CD4-positive, alpha-beta T cell (primary cell): ENCODE measurements at regions of chr10 and their contacts with region 1.

Region 1: DNA sequence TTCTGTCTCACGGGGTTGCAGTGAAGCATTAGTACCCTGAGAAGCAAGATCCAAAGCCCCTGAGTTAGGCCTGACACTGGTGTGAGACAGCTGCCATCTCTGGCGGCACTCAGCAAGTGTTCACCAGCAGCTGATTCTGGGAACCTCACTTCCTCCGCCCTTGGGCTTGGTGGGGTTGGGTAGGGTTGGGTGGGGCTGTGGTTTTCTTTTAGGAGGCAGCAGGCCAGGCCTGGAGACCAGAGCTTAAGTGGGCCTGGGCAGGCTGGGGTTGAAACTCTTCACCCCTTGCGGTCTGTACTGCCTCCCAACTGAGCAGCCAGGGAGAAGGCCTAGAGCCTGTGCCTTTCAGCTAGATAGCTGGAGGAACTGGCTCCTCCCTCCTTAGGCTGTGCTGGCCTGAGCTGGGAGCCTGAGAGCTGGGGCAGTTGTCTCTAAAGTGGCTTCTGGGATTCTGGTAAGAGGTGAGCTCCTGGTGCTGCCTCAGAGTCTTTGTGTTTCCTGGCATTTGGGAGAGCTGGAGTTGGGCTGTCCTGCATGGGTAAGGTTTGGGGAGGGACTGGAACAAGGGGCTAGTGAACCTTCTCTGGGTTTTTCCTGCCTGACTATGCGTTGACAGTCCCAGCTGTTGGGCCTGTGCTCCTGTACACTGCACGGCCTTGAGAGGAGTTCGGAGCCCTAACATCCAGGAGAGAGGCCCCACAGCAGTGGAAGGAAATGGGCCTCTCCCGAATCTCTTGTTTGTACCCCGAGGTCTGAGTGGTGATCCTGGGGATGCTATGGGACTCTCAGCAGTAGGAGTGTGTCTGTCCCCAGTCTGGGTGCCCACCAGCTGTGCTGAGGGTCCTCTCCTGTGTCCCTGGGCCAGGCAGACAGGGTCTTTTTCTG is 5.2 kb downstream of the TSPAN14 start:
- DNase-seq: peak; percentile 47 to 87 (median 66)
- ATAC-seq: peak; percentile 57
- H3K4me3 ChIP-seq: peak overlapping the region; percentile 97
- H3K4me3 Mint-ChIP-seq: peak overlapping the region; percentile 95
- H3K27ac ChIP-seq: peak overlapping the region; percentile 69 to 91
- H3K27ac Mint-ChIP-seq: peak overlapping the region; percentile 92
- H3K4me1 ChIP-seq: peaks cover 92% of the 10 kb centered on the region
- H3K4me1 Mint-ChIP-seq: peaks cover 83% of the 10 kb centered on the region
- H3K27me3 ChIP-seq: no peaks in the 10 kb centered on the region
- H3K27me3 Mint-ChIP-seq: no peaks in the 10 kb centered on the region
- CTCF ChIP-seq: no peak

Region 2: DNA sequence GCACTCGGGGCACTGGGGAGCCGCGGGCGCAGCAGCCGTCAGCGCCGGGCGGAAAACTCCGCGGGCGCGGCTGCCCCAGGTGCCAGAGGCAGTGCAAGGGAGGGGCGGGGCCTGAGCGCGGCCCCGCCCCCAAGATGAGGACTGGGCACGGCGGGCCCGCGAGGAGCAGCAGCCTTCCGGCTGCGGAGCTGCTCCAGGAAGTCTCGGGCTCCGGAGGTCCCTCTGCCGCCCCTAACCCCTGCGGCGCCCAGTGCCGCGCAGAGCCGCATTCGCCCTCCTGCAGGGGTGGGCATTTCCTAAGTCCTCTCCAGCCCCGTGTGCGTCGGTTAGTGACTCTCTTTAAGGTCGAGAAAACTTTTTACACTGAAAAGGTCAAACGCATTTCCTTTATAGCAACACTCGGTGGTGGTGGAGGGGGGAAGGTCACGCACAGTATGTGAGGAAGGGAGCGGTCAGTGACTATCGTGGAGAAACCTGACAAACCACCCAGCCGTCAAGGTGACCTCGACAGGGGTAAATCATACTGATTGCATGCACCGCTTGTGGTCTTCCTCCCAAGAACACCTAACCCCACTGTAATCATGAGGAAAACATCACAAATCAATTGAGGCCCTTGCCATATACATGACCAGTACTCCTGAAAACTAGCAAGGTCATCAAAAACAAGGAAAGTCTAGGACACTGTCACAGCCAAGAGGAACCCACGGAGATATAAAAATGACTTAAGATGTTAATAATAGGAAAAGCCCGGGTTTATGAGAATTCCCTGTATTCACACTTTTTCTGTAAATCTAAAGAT is 253.6 kb before region 1 on chr10 and contains the start of gene ANXA11:
- CTCF ChIA-PET with region 1: no interaction called
- POLR2A ChIA-PET with region 1: no interaction called
- intact Hi-C with region 1: loop called in 1 of 2 experiments (anchors 10 kb)
- DNase-seq: peak; percentile 72 to 94 (median 88)
- ATAC-seq: peak; percentile 79
- H3K4me3 ChIP-seq: peak within 1 kb of the TSS; percentile 86
- H3K4me3 Mint-ChIP-seq: peak within 1 kb of the TSS; percentile 90
- H3K27ac ChIP-seq: peak within 1 kb of the TSS; percentile 72 to 86
- H3K27ac Mint-ChIP-seq: peak within 1 kb of the TSS; percentile 96
- H3K4me1 ChIP-seq: peaks cover 53% of the 10 kb centered on the region
- H3K4me1 Mint-ChIP-seq: peaks cover 56% of the 10 kb centered on the region
- H3K27me3 ChIP-seq: no peaks in the 10 kb centered on the region
- H3K27me3 Mint-ChIP-seq: no peaks in the 10 kb centered on the region
- CTCF ChIP-seq: no peak
- total RNA-seq, gene ANXA11: 153 to 159 TPM

Region 3: DNA sequence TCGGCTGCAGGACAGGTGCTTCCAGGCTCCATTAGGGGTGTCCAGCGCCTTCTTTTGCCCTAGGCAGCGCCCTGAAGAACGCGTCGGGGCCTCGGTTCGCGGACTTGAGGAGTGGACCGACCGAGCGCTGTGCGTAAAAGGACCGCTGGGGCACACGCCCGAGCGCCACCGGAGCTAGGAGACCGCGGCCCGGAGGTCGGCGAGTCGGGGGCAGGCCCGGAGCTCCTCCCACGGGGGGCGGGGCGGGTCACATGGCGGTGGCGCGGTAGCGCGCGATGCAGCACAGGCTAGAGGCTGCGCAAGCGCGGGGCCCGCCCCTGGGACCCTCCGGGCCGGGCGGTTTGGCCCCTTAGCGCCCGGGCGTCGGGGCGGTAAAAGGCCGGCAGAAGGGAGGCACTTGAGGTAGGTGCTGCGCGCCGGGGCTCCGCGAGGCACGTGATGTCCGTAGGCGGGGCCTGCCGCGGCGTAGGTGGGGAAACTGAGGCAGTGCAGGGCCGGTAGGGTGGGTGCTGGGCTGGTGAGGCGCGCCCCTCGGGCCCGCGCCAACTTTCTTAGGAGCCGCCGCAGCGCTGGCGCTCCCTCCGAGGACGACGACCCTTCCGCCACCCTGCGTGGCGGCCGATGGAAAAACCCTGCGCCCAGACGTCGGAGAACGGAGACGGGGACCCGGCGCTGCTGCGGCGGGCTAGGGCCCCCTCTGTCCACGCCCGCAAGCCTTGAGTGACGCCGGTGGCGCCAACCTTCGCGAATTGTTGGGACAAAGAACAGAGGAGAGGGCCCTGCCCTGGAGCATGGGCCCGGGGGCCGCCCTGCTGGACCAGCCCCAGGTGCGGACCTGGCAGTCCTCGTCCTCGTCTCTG is 50.8 kb before region 1 on chr10 and contains the start of gene PRXL2A:
- CTCF ChIA-PET with region 1: interaction called, 3 read pairs
- POLR2A ChIA-PET with region 1: interaction called, 8 read pairs
- intact Hi-C with region 1: loop called in 1 of 2 experiments (anchors 5 kb)
- DNase-seq: peak; percentile 61 to 89 (median 76)
- ATAC-seq: peak; percentile 95
- H3K4me3 ChIP-seq: peak within 1 kb of the TSS; percentile 83
- H3K4me3 Mint-ChIP-seq: peak within 1 kb of the TSS; percentile 94
- H3K27ac ChIP-seq: peak within 1 kb of the TSS in 1 of 2 donors; percentile 10
- H3K27ac Mint-ChIP-seq: peak within 1 kb of the TSS; percentile 69
- H3K4me1 ChIP-seq: peaks cover 19% of the 10 kb centered on the region
- H3K4me1 Mint-ChIP-seq: peaks cover 50% of the 10 kb centered on the region
- H3K27me3 ChIP-seq: no peaks in the 10 kb centered on the region
- H3K27me3 Mint-ChIP-seq: no peaks in the 10 kb centered on the region
- CTCF ChIP-seq: no peak
- total RNA-seq, gene PRXL2A: 3.9 to 4.6 TPM

Region 4: GRCh38 chr10:80472234-80473095 is 13.2 kb after region 1 on chr10:
- CTCF ChIA-PET with region 1: interaction called, 12 read pairs
- POLR2A ChIA-PET with region 1: interaction called, 176 read pairs
- intact Hi-C with region 1: loop called in 1 of 2 experiments (anchors 1 kb)
- DNase-seq: peak in 3 of 14 experiments; percentile 65 to 77 (median 75)
- ATAC-seq: peak; percentile 65
- H3K4me3 ChIP-seq: peak overlapping the region; percentile 23
- H3K4me3 Mint-ChIP-seq: peak overlapping the region; percentile 84
- H3K27ac ChIP-seq: peak overlapping the region; percentile 46 to 48
- H3K27ac Mint-ChIP-seq: peak overlapping the region; percentile 92
- H3K4me1 ChIP-seq: peaks cover 98% of the 10 kb centered on the region
- H3K4me1 Mint-ChIP-seq: peaks cover 93% of the 10 kb centered on the region
- H3K27me3 ChIP-seq: no peaks in the 10 kb centered on the region
- H3K27me3 Mint-ChIP-seq: no peaks in the 10 kb centered on the region
- CTCF ChIP-seq: no peak

Region 5: DNA sequence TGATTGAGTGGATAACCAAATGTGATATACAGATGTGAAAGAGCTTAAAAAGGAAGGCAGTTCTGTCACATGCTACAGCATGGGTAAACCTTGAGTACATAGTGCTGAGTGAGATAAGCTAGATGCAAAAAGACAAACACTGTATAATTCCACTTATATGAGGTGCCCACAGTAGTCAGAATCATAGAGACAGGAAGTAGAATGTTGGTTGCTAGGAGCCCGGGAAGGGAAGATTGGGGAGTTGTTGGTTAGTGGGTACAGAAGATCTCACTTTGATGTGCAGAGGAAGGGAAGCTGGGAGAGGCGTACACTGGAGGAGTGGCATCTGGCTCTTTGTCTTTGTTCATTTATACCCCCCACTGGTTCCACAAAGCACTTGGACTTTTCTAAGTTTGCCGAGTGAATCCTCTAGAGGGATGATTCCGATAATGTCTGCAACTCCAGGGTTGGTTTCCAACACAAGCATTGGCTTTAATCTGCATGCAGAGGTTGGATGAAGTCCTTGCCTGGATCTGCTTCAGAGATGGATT is 34.3 kb after region 1 on chr10:
- CTCF ChIA-PET with region 1: interaction called, 250 read pairs
- POLR2A ChIA-PET with region 1: interaction called, 420 read pairs
- intact Hi-C with region 1: loop called in 1 of 2 experiments (anchors 5 kb)
- DNase-seq: peak in 4 of 14 experiments; percentile 49 to 65 (median 62)
- ATAC-seq: peak; percentile 74
- H3K4me3 ChIP-seq: no peak overlapping the region
- H3K4me3 Mint-ChIP-seq: peak overlapping the region; percentile 62
- H3K27ac ChIP-seq: peak overlapping the region; percentile 10 to 30
- H3K27ac Mint-ChIP-seq: peak overlapping the region; percentile 78
- H3K4me1 ChIP-seq: peaks cover 84% of the 10 kb centered on the region
- H3K4me1 Mint-ChIP-seq: peaks cover 99% of the 10 kb centered on the region
- H3K27me3 ChIP-seq: no peaks in the 10 kb centered on the region
- H3K27me3 Mint-ChIP-seq: no peaks in the 10 kb centered on the region
- CTCF ChIP-seq: no peak

Region 6: GRCh38 chr10:80498833-80499741 is 39.8 kb after region 1 on chr10:
- CTCF ChIA-PET with region 1: interaction called, 250 read pairs
- POLR2A ChIA-PET with region 1: interaction called, 420 read pairs
- intact Hi-C with region 1: loop called in 1 of 2 experiments (anchors 5 kb)
- DNase-seq: peak in 9 of 14 experiments; percentile 31 to 77 (median 49)
- ATAC-seq: peak; percentile 30
- H3K4me3 ChIP-seq: peak overlapping the region; percentile 10
- H3K4me3 Mint-ChIP-seq: peak overlapping the region; percentile 83
- H3K27ac ChIP-seq: peak overlapping the region; percentile 49 to 54
- H3K27ac Mint-ChIP-seq: peak overlapping the region; percentile 78
- H3K4me1 ChIP-seq: peaks cover 89% of the 10 kb centered on the region
- H3K4me1 Mint-ChIP-seq: peaks cover 100% of the 10 kb centered on the region
- H3K27me3 ChIP-seq: no peaks in the 10 kb centered on the region
- H3K27me3 Mint-ChIP-seq: no peaks in the 10 kb centered on the region
- CTCF ChIP-seq: no peak